ENCODE measurements at regions of chr19 and their contacts with region 1.

Region 1: GRCh38 chr19:21835810-21836444 is at the start of gene ZNF43:
- DNase-seq: peak; percentile 96
- ATAC-seq: peak; percentile 97
- H3K4me3 Mint-ChIP-seq: peak within 1 kb of the TSS; percentile 99
- H3K27ac Mint-ChIP-seq: peak within 1 kb of the TSS; percentile 100
- H3K4me1 Mint-ChIP-seq: peaks cover 35% of the 10 kb centered on the region
- H3K27me3 Mint-ChIP-seq: no peaks in the 10 kb centered on the region
- total RNA-seq, gene ZNF43: 31.7 to 38.6 TPM

Region 2: DNA sequence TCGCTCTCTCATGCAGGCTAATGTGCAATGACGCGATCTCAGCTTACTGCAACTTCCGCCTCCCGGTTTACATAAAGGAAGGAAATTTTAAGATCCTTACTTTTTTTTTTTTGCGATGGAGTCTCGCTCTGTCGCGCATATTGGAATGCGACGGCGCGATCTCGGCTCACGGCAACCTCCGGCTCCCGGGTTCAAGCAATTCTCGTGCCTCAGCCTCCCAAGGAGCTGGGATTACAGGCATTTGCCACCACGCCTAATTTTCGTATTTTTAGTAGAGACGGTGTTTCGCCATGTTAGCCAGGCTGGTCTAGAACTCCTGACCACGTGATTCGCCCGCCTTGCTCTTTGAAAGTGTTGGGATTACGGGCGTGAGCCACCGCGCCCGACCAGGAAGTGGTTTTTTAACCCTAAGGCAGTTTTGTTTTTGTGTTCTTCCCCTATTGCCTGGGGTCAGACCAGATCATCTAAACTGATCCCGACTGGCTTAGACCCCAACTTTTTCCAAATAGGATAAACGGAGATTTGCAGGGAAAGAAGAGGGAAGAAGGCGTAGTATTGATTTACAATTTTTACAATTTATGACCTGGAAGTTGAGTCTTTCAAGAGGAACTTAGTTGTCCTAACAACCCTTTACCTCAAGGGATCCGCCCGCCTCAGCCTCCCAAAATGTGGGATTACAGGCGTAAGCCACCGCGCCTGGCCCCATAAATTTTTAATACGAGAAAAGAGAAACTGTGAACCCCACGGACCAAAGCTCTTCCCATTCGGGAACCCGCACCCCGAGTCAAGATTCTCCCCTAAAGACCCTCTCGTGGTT is 1412.3 kb before region 1 on chr19:
- CTCF ChIA-PET with region 1: no interaction called
- POLR2A ChIA-PET with region 1: no interaction called
- intact Hi-C with region 1: loop called in 1 of 2 experiments (anchors 5 kb)
- DNase-seq: peak; percentile 61
- ATAC-seq: no peak
- H3K4me3 Mint-ChIP-seq: peak overlapping the region; percentile 96
- H3K27ac Mint-ChIP-seq: peak overlapping the region; percentile 99
- H3K4me1 Mint-ChIP-seq: peaks cover 9% of the 10 kb centered on the region
- H3K27me3 Mint-ChIP-seq: no peaks in the 10 kb centered on the region

Region 3: GRCh38 chr19:21767065-21767800 is 68.7 kb before region 1 on chr19 and contains the start of gene ZNF100:
- CTCF ChIA-PET with region 1: interaction called, 5 read pairs
- POLR2A ChIA-PET with region 1: interaction called, 14 read pairs
- intact Hi-C with region 1: loop called (anchors 1 kb)
- DNase-seq: peak; percentile 94
- ATAC-seq: peak; percentile 98
- H3K4me3 Mint-ChIP-seq: peak within 1 kb of the TSS; percentile 98
- H3K27ac Mint-ChIP-seq: peak within 1 kb of the TSS; percentile 95
- H3K4me1 Mint-ChIP-seq: peaks cover 30% of the 10 kb centered on the region
- H3K27me3 Mint-ChIP-seq: no peaks in the 10 kb centered on the region
- total RNA-seq, gene ZNF100: 24.7 to 27.0 TPM

Region 4: GRCh38 chr19:21883516-21883915 is 47.6 kb after region 1 on chr19:
- CTCF ChIA-PET with region 1: no interaction called
- POLR2A ChIA-PET with region 1: no interaction called
- intact Hi-C with region 1: no loop called
- DNase-seq: no peak
- ATAC-seq: no peak
- H3K4me3 Mint-ChIP-seq: no peak overlapping the region
- H3K27ac Mint-ChIP-seq: no peak overlapping the region
- H3K4me1 Mint-ChIP-seq: no peaks in the 10 kb centered on the region
- H3K27me3 Mint-ChIP-seq: peaks cover 9% of the 10 kb centered on the region

Region 5: GRCh38 chr19:21940684-21941083 is 104.8 kb after region 1 on chr19:
- CTCF ChIA-PET with region 1: no interaction called
- POLR2A ChIA-PET with region 1: no interaction called
- intact Hi-C with region 1: no loop called
- DNase-seq: no peak
- ATAC-seq: no peak
- H3K4me3 Mint-ChIP-seq: no peak overlapping the region
- H3K27ac Mint-ChIP-seq: no peak overlapping the region
- H3K4me1 Mint-ChIP-seq: no peaks in the 10 kb centered on the region
- H3K27me3 Mint-ChIP-seq: no peaks in the 10 kb centered on the region

Region 6: DNA sequence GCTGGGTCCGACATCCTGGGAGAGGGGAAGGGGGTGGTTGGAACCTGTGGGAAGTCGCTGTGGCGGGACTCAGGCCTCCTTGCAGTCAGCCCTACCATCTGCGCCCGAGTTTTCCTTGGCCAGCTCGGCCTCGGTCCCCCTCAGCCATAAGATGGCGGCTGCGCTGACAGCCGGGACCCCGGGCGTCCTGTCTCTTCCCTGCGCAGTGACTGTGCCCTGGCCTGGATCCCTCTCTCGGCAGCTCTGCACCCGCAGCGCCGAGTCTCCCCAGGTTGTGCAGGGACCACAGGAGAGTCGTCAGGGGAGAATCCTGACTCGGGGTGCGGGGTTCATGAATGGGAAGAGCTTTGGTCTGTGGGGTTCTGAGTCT is 216.7 kb after region 1 on chr19:
- CTCF ChIA-PET with region 1: no interaction called
- POLR2A ChIA-PET with region 1: interaction called, 4 read pairs
- intact Hi-C with region 1: loop called in 1 of 2 experiments (anchors 5 kb)
- DNase-seq: peak; percentile 52
- ATAC-seq: peak; percentile 47
- H3K4me3 Mint-ChIP-seq: peak overlapping the region; percentile 90
- H3K27ac Mint-ChIP-seq: peak overlapping the region; percentile 93
- H3K4me1 Mint-ChIP-seq: peaks cover 5% of the 10 kb centered on the region
- H3K27me3 Mint-ChIP-seq: no peaks in the 10 kb centered on the region

Region 7: GRCh38 chr19:23249911-23250649 is 1414.2 kb after region 1 on chr19 and contains the start of gene ZNF724:
- CTCF ChIA-PET with region 1: no interaction called
- POLR2A ChIA-PET with region 1: no interaction called
- intact Hi-C with region 1: loop called in 1 of 2 experiments (anchors 10 kb)
- DNase-seq: peak; percentile 94
- ATAC-seq: peak; percentile 100
- H3K4me3 Mint-ChIP-seq: peak within 1 kb of the TSS; percentile 87
- H3K27ac Mint-ChIP-seq: peak within 1 kb of the TSS; percentile 96
- H3K4me1 Mint-ChIP-seq: peaks cover 12% of the 10 kb centered on the region
- H3K27me3 Mint-ChIP-seq: no peaks in the 10 kb centered on the region
- total RNA-seq, gene ZNF724: 15.1 to 19.1 TPM